Colonic mucosa (tissue), 4 donors: ENCODE measurements at regions of chr19 and their contacts with region 1.

Region 1: DNA sequence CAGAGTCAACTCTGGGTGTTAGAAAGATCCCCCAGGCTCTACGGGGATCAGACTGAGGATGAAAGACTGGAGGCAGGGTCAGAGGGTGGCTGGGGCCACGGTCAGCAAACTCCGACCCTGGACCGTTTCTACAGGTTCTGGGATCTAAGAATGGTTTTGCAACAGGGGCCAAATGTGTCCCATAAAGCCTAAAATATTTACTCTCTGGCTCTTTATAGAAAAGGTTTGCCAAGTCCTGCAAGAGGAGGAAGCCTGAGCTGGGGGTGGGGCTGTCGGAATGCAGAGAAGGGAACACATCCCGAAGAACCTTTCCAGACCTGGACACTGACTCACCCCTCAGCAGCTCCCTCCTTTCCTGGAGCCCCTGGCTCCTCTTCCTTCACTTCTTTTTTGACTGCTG is 20.7 kb downstream of the LIG1 start:
- DNase-seq: no peak
- H3K4me3 ChIP-seq: no peak overlapping the region
- H3K27ac ChIP-seq: no peak overlapping the region
- H3K4me1 ChIP-seq: no peaks in the 10 kb centered on the region
- H3K27me3 ChIP-seq: no peaks in the 10 kb centered on the region
- CTCF ChIP-seq: no peak

Region 2: GRCh38 chr19:48110350-48110966 is 39.0 kb before region 1 on chr19 and contains the start of gene PLA2G4C:
- intact Hi-C with region 1: loop called (anchors 2 kb)
- DNase-seq: peak; percentile 81
- H3K4me3 ChIP-seq: peak within 1 kb of the TSS; percentile 39
- H3K27ac ChIP-seq: peak within 1 kb of the TSS; percentile 96
- H3K4me1 ChIP-seq: no peaks in the 10 kb centered on the region
- H3K27me3 ChIP-seq: no peaks in the 10 kb centered on the region
- CTCF ChIP-seq: no peak
- total RNA-seq, gene PLA2G4C: 1.7 to 6.8 TPM